ENCODE measurements at regions of chr12 and their contacts with region 1.

Region 1: DNA sequence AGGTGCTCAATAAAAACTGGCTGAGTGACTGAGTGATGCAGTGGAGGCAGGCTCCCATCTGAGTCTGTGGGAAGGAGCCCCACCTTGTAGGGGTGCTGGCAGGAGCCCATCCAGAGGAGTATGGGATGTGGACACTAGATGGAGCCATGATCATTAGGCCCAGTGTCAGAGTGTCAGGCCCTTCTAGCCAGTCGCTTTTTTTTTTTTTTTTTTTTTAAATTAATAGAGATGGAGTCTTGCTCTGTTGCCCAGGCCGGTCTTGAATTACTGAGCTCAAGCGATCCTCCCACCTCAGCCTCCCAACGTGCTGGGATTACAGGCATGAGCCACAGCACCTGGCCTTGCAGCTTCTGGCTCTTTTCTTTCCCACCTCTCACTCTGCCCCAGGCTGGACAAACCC is 11.5 kb downstream of the RITA1 start:
- DNase-seq: peak; percentile 33
- ATAC-seq: peak; percentile 99
- H3K4me3 Mint-ChIP-seq: peak overlapping the region; percentile 28
- H3K27ac Mint-ChIP-seq: peak overlapping the region; percentile 61
- H3K4me1 Mint-ChIP-seq: peaks cover 16% of the 10 kb centered on the region
- H3K27me3 Mint-ChIP-seq: no peaks in the 10 kb centered on the region
- CTCF ChIP-seq: no peak

Region 2: GRCh38 chr12:112798006-112798760 is 398.8 kb before region 1 on chr12:
- CTCF ChIA-PET with region 1: no interaction called
- POLR2A ChIA-PET with region 1: no interaction called
- intact Hi-C with region 1: no loop called
- DNase-seq: no peak
- ATAC-seq: no peak
- H3K4me3 Mint-ChIP-seq: no peak overlapping the region
- H3K27ac Mint-ChIP-seq: no peak overlapping the region
- H3K4me1 Mint-ChIP-seq: no peaks in the 10 kb centered on the region
- H3K27me3 Mint-ChIP-seq: peaks cover 53% of the 10 kb centered on the region
- CTCF ChIP-seq: no peak

Region 3: GRCh38 chr12:113208041-113208934 is 11.3 kb after region 1 on chr12:
- CTCF ChIA-PET with region 1: interaction called, 11 read pairs
- POLR2A ChIA-PET with region 1: interaction called, 43 read pairs
- intact Hi-C with region 1: loop called (anchors 1 kb)
- DNase-seq: peak; percentile 64
- ATAC-seq: peak; percentile 81
- H3K4me3 Mint-ChIP-seq: peak overlapping the region; percentile 76
- H3K27ac Mint-ChIP-seq: peak overlapping the region; percentile 98
- H3K4me1 Mint-ChIP-seq: peaks cover 69% of the 10 kb centered on the region
- H3K27me3 Mint-ChIP-seq: no peaks in the 10 kb centered on the region
- CTCF ChIP-seq: no peak

Region 4: GRCh38 chr12:113232840-113233585 is 36.0 kb after region 1 on chr12:
- CTCF ChIA-PET with region 1: interaction called, 44 read pairs
- POLR2A ChIA-PET with region 1: interaction called, 37 read pairs
- intact Hi-C with region 1: loop called (anchors 1 kb)
- DNase-seq: peak; percentile 73
- ATAC-seq: peak; percentile 78
- H3K4me3 Mint-ChIP-seq: peak overlapping the region; percentile 76
- H3K27ac Mint-ChIP-seq: peak overlapping the region; percentile 95
- H3K4me1 Mint-ChIP-seq: peaks cover 87% of the 10 kb centered on the region
- H3K27me3 Mint-ChIP-seq: no peaks in the 10 kb centered on the region
- CTCF ChIP-seq: no peak

Region 5: GRCh38 chr12:113310489-113310888 is 113.5 kb after region 1 on chr12:
- CTCF ChIA-PET with region 1: no interaction called
- POLR2A ChIA-PET with region 1: no interaction called
- intact Hi-C with region 1: loop called (anchors 1 kb)
- DNase-seq: no peak
- ATAC-seq: no peak
- H3K4me3 Mint-ChIP-seq: no peak overlapping the region
- H3K27ac Mint-ChIP-seq: no peak overlapping the region
- H3K4me1 Mint-ChIP-seq: no peaks in the 10 kb centered on the region
- H3K27me3 Mint-ChIP-seq: no peaks in the 10 kb centered on the region
- CTCF ChIP-seq: no peak

Region 6: DNA sequence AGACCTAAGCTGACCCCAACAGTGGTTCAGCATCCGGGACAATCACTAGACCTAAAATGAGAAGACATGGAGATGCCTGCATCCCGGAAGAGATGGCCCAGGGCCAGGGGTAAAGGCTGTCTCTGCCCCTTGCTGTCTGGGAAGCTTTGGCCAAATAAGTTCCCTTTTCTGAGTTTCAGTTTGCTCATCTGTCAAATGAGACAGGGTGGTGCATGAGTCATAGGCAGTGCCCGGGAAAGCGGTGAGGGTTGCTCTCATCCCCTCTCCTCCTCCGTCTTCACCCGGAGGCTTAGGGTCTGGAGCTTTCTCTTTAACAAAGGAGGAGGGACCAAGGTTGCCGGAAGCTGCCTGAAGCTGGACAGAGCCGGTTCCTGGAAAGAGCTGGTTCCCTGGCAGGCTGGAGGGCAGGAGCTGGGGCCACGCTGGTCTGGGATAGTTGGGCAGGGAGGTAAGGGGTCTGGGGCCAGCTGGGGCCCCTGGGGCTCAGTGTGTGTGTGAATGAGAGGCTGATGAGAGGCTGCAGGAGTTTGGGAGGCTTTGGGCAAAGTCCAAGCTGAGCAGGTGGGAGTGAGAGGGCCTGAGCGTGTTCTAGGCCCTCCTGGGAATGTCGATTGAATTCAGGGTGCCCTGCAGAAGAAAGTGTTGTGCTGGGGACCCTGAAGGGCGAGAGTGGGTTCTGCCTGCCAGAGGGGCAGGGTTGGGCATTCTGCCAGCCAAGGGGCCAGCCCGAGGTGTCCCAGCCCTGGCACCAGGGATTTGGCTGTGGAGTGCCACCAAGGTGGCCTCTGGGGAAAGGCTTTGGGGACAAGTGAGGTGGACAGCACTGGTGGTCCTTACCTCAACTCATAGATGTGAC is 225.3 kb after region 1 on chr12 and contains the start of gene SDSL:
- CTCF ChIA-PET with region 1: interaction called, 7 read pairs
- POLR2A ChIA-PET with region 1: no interaction called
- intact Hi-C with region 1: loop called (anchors 1 kb)
- DNase-seq: peak; percentile 41
- ATAC-seq: peak; percentile 92
- H3K4me3 Mint-ChIP-seq: peak within 1 kb of the TSS; percentile 67
- H3K27ac Mint-ChIP-seq: peak within 1 kb of the TSS; percentile 68
- H3K4me1 Mint-ChIP-seq: peaks cover 25% of the 10 kb centered on the region
- H3K27me3 Mint-ChIP-seq: peaks cover 14% of the 10 kb centered on the region
- CTCF ChIP-seq: no peak
- total RNA-seq, gene SDSL: 0.20 and 1.2 TPM in 2 replicates

Measured in activated B cell treated with CpG ODN at 0.5 μM for 24 hours (primary cell).